ENCODE measurements at regions of chr2 and their contacts with region 1.

Region 1: GRCh38 chr2:237572021-237572741 is 5.8 kb downstream of the PRLH start:
- DNase-seq: peak; percentile 92 to 93
- ATAC-seq: peak; percentile 90 to 93 (median 92)
- H3K4me3 ChIP-seq: peak overlapping the region in 1 of 10 donors; percentile 24
- H3K27ac ChIP-seq: peak overlapping the region in 1 of 10 donors; percentile 19
- H3K4me1 ChIP-seq: peaks cover 0 to 45% (median 12%) of the 10 kb centered on the region in 9 donors
- H3K27me3 ChIP-seq: peaks cover 0 to 5% (median 0%) of the 10 kb centered on the region in 7 donors
- CTCF ChIP-seq: peak; percentile 97 to 100 (median 99)

Region 2: GRCh38 chr2:237092920-237093781 is 479.0 kb before region 1 on chr2:
- intact Hi-C with region 1: loop called in 4 of 10 experiments (anchors 10 kb)
- DNase-seq: peak in 1 of 2 donors; percentile 48
- ATAC-seq: peak; percentile 66 to 82 (median 72)
- H3K4me3 ChIP-seq: no peak overlapping the region
- H3K27ac ChIP-seq: peak overlapping the region in 2 of 10 donors; percentile 50 to 62
- H3K4me1 ChIP-seq: peaks cover 0 to 60% (median 21%) of the 10 kb centered on the region in 9 donors
- H3K27me3 ChIP-seq: no peaks in the 10 kb centered on the region
- CTCF ChIP-seq: peak; percentile 24 to 67 (median 54)

Region 3: GRCh38 chr2:237122214-237122666 is 449.9 kb before region 1 on chr2:
- intact Hi-C with region 1: loop called in 8 of 10 experiments (anchors 5 to 10 kb)
- DNase-seq: peak; percentile 47 to 65
- ATAC-seq: peak; percentile 56 to 86 (median 74)
- H3K4me3 ChIP-seq: no peak overlapping the region
- H3K27ac ChIP-seq: no peak overlapping the region
- H3K4me1 ChIP-seq: peaks cover 0 to 17% (median 0%) of the 10 kb centered on the region in 9 donors
- H3K27me3 ChIP-seq: no peaks in the 10 kb centered on the region
- CTCF ChIP-seq: peak; percentile 46 to 76 (median 71)

Region 4: GRCh38 chr2:237154082-237154638 is 418.0 kb before region 1 on chr2:
- intact Hi-C with region 1: loop called in 1 of 10 experiments (anchors 10 kb)
- DNase-seq: no peak
- ATAC-seq: no peak
- H3K4me3 ChIP-seq: no peak overlapping the region
- H3K27ac ChIP-seq: peak overlapping the region in 5 of 10 donors; percentile 14 to 82 (median 76)
- H3K4me1 ChIP-seq: peaks cover 0 to 28% (median 7%) of the 10 kb centered on the region in 9 donors
- H3K27me3 ChIP-seq: peaks cover 0 to 7% (median 0%) of the 10 kb centered on the region in 7 donors
- CTCF ChIP-seq: peak; percentile 12 to 67 (median 63)

Region 5: GRCh38 chr2:237421542-237422116 is 150.6 kb before region 1 on chr2:
- intact Hi-C with region 1: loop called in 5 of 10 experiments (anchors 2 to 10 kb)
- DNase-seq: peak; percentile 77 to 85
- ATAC-seq: peak; percentile 84 to 92 (median 88)
- H3K4me3 ChIP-seq: peak overlapping the region in 7 of 10 donors; percentile 1 to 38 (median 27)
- H3K27ac ChIP-seq: peak overlapping the region in 9 of 10 donors; percentile 0 to 54 (median 23)
- H3K4me1 ChIP-seq: peaks cover 0 to 28% (median 18%) of the 10 kb centered on the region in 9 donors
- H3K27me3 ChIP-seq: peaks cover 0 to 10% (median 3%) of the 10 kb centered on the region in 7 donors
- CTCF ChIP-seq: peak; percentile 61 to 93 (median 87)

Region 6: DNA sequence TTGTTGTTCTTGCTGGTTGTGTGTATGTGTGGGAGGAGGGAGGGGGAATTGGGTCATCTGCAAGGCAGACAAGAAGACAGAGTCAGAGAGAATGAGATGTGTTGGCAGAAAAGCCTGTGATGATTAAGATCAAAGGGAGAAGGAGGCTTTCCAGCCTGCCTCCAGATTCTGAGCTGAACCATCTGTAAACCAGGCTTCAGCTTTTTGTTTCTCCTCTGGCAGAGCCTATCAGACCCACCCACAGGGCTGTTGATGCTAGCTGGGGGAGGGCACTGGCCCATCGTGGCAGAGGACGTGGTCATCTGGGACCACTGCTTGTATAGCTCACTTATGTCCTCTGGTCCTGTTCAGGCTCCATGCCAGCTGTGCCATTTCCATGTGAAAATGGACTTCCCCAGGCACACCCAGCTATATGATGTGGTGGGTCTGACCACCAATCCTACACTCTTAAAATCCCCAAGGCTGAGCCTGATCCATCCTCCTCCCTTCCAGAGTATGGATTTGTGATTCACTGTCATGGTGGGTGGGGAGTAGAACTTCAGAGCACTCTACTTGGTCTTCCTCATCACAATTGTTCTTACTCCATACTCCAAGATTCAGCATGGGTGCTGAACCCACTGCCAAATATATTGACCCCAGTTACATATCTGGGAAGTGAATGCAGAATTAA is 130.4 kb before region 1 on chr2:
- intact Hi-C with region 1: no loop called
- DNase-seq: no peak
- ATAC-seq: peak in 3 of 8 donors; percentile 22 to 63 (median 27)
- H3K4me3 ChIP-seq: no peak overlapping the region
- H3K27ac ChIP-seq: peak overlapping the region in 2 of 10 donors; percentile 9 to 38
- H3K4me1 ChIP-seq: peaks cover 0 to 26% (median 6%) of the 10 kb centered on the region in 9 donors
- H3K27me3 ChIP-seq: peaks cover 0 to 12% (median 3%) of the 10 kb centered on the region in 7 donors
- CTCF ChIP-seq: no peak

Region 7: GRCh38 chr2:237467447-237468179 is 104.6 kb before region 1 on chr2:
- intact Hi-C with region 1: no loop called
- DNase-seq: no peak
- ATAC-seq: no peak
- H3K4me3 ChIP-seq: no peak overlapping the region
- H3K27ac ChIP-seq: no peak overlapping the region
- H3K4me1 ChIP-seq: peaks cover 0 to 10% (median 0%) of the 10 kb centered on the region in 9 donors
- H3K27me3 ChIP-seq: no peaks in the 10 kb centered on the region
- CTCF ChIP-seq: no peak

Region 8: GRCh38 chr2:237512774-237513466 is 59.3 kb before region 1 on chr2:
- intact Hi-C with region 1: loop called (anchors 1 to 2 kb)
- DNase-seq: peak; percentile 85 to 88
- ATAC-seq: peak; percentile 62 to 86 (median 74)
- H3K4me3 ChIP-seq: no peak overlapping the region
- H3K27ac ChIP-seq: peak overlapping the region in 9 of 10 donors; percentile 57 to 87 (median 81)
- H3K4me1 ChIP-seq: peaks cover 5 to 61% (median 45%) of the 10 kb centered on the region in 9 donors
- H3K27me3 ChIP-seq: no peaks in the 10 kb centered on the region
- CTCF ChIP-seq: peak; percentile 86 to 98 (median 87)

Measured in heart right ventricle (tissue), 16 donors.